MCF 10A (cell line): ENCODE measurements at regions of chr6 and their contacts with region 1.

Region 1: GRCh38 chr6:89371849-89372505 is 19.5 kb upstream of the UBE2J1 start:
- DNase-seq: peak; percentile 61
- H3K4me3 Mint-ChIP-seq: no peak overlapping the region
- H3K27ac Mint-ChIP-seq: no peak overlapping the region
- H3K4me1 Mint-ChIP-seq: no peaks in the 10 kb centered on the region
- H3K27me3 Mint-ChIP-seq: no peaks in the 10 kb centered on the region
- CTCF ChIP-seq: peak; percentile 81

Region 2: DNA sequence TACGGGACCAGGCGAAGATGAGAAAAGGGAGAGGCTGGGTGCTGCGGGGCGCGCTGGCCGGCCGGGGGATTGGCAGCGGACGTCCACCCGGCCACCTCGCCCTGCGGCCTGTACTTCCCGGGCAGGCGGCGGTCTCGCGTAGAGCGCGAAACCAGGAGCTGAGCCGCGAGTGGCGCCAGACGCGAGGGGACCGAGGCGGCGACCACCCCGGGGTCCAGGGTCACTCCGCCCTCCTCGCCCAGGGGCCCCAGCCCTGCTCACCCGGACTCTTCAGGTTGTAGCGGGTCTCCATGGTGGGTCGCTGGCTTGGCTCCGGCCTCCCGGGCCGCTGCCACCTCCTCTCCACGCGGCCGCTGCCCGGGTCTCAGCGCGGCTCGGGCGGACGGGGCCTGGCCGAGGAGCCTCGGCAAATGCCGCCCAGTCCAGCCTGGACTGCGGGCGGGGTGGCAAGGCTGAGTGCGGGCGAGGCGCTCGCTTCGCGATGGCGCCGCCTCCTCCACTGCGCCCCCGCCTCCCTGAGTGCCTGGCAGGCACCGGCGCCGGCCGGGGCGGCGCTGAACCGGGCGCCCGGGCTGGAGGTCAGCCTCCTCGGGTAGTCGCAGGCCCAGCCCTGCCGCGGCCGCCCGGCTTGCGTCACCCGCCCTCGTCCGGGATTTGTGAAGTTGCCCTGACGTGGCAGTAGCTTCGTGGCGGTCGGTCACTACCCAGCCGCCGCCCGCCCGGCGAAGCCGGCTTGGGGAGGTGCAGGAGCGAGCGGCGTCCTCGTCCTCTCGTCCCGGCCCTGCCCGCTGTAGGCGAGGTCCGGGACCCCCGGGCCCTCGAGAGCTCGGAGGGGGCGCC is 19.5 kb before region 1 on chr6 and contains the start of gene UBE2J1:
- CTCF ChIA-PET with region 1: interaction called, 34 read pairs
- POLR2A ChIA-PET with region 1: interaction called, 6 read pairs
- intact Hi-C with region 1: no loop called
- DNase-seq: peak; percentile 89
- H3K4me3 Mint-ChIP-seq: peak within 1 kb of the TSS; percentile 96
- H3K27ac Mint-ChIP-seq: peak within 1 kb of the TSS; percentile 98
- H3K4me1 Mint-ChIP-seq: peaks cover 22% of the 10 kb centered on the region
- H3K27me3 Mint-ChIP-seq: no peaks in the 10 kb centered on the region
- CTCF ChIP-seq: no peak
- total RNA-seq, gene UBE2J1: 39.0 and 40.0 TPM in 2 replicates

Region 3: DNA sequence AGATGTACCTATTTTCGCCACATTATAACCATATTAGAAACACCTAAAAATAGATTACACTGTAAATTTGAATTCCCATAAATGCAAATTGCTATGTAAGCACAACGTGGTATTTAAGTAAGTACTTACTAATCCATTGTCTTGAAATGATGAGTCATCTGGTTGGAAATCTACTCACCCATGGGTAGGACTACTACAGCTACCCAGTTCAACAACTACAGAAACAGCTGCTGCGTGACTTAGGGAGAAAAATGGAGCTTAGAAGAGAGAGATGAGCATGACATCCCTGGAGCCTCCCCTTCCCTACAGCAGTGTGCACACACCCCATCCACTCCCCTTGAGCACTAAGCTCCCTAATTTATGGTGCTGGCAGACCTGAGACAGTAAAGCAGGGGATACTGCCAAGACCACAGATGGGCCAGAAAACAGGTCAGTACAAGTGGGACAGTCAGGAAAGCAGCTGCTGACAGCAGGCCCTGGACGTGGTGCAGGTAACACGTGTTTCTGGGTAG is 13.2 kb after region 1 on chr6:
- CTCF ChIA-PET with region 1: interaction called, 16 read pairs
- POLR2A ChIA-PET with region 1: no interaction called
- intact Hi-C with region 1: no loop called
- DNase-seq: peak; percentile 76
- H3K4me3 Mint-ChIP-seq: no peak overlapping the region
- H3K27ac Mint-ChIP-seq: no peak overlapping the region
- H3K4me1 Mint-ChIP-seq: peaks cover 6% of the 10 kb centered on the region
- H3K27me3 Mint-ChIP-seq: no peaks in the 10 kb centered on the region
- CTCF ChIP-seq: no peak

Region 4: DNA sequence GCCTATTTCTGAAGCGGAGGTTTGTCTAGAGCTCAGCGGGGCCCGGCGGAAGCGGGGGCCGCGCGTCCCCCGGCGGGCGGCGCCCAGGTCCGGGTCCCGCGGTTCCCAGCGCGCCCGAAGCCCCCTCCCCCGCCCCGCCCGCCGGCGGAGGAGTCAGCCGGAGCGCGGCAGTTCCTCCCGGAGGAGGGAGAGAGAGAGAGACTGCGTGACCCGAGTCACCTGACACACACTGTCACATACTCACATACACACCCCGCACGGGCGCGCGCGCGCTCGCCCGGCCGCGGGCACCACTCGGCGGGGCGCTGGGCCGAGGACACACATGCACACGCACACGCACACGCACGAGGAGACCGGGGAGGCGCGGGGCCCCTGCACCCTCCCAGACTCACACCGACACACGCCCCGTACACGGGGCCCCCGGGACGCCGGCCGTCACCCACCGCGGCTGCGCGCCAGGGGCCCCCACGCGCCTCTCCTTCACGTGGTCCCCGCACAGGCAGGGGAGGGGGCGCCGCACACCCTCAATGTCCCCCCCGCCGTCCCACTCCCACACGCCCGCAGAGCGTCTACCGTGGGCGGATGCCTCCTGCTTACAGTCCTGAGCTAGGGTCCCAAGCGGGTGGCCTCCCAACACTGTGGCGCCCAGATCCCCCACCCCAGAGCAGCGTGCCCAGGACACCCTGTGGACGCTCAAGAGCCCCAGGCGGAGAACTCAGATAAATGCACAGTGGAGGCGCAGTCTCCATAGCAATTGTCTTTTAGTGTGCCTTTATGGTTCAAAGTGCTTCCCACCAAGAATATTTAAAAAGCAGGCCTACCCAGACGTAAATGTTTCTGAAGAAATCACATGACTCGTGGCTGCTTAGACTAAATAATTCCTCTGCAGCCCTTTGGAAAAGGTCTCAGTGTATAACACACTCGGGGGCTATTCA is 40.4 kb after region 1 on chr6 and contains the start of gene RRAGD:
- CTCF ChIA-PET with region 1: interaction called, 12 read pairs
- POLR2A ChIA-PET with region 1: interaction called, 3 read pairs
- intact Hi-C with region 1: no loop called
- DNase-seq: no peak
- H3K4me3 Mint-ChIP-seq: peak within 1 kb of the TSS; percentile 71
- H3K27ac Mint-ChIP-seq: no peak within 1 kb of the TSS
- H3K4me1 Mint-ChIP-seq: no peaks in the 10 kb centered on the region
- H3K27me3 Mint-ChIP-seq: peaks cover 25% of the 10 kb centered on the region
- CTCF ChIP-seq: no peak
- total RNA-seq, gene RRAGD: 0.33 and 0.49 TPM in 2 replicates

Region 5: DNA sequence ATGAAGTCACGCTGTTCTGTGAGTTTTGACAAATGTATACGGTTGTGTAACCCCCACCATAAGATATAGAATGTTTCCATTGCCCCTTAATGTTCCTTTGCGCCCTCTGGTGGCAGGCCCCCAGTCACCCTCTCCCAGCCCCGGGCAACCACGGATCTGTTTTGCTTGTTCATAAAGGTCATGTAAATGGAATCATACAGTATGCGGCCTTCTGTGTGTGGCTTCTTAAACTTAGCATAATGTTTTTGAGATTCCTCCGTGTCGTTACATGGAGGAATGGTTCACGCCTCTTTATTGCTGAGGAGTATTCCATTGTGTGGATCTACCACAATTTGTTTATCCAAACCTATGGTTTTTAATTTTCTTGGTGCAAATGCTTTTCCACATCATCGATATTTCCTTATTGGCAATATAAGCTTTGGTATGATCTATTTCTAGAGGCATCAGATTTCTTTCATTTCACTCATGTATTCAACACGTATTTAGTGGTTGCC is 238.2 kb after region 1 on chr6:
- CTCF ChIA-PET with region 1: interaction called, 12 read pairs
- POLR2A ChIA-PET with region 1: no interaction called
- intact Hi-C with region 1: loop called (anchors 1 kb)
- DNase-seq: peak; percentile 63
- H3K4me3 Mint-ChIP-seq: no peak overlapping the region
- H3K27ac Mint-ChIP-seq: no peak overlapping the region
- H3K4me1 Mint-ChIP-seq: no peaks in the 10 kb centered on the region
- H3K27me3 Mint-ChIP-seq: no peaks in the 10 kb centered on the region
- CTCF ChIP-seq: peak; percentile 68